ENCODE measurements at regions of chr2 and their contacts with region 1.

Region 1: GRCh38 chr2:211455216-211455841 is 898.9 kb downstream of the CPS1 start:
- DNase-seq: peak; percentile 39
- H3K4me3 ChIP-seq: peak overlapping the region in 1 of 2 experiments; percentile 40; a peak in 1 of 4 replicates
- H3K27ac ChIP-seq: no peak overlapping the region
- H3K4me1 ChIP-seq: peaks cover 3 to 8% of the 10 kb centered on the region in 2 experiments; a peak in 3 of 4 replicates
- H3K27me3 ChIP-seq: no peaks in the 10 kb centered on the region
- CTCF ChIP-seq: peak; percentile 98
- EP300 ChIP-seq: no peak
- RAD21 ChIP-seq: peak; percentile 77

Region 2: GRCh38 chr2:211437396-211437795 is 17.9 kb before region 1 on chr2:
- CTCF ChIA-PET with region 1: interaction called, 24 read pairs
- POLR2A ChIA-PET with region 1: no interaction called
- DNase-seq: no peak
- H3K4me3 ChIP-seq: no peak overlapping the region
- H3K27ac ChIP-seq: no peak overlapping the region
- H3K4me1 ChIP-seq: no peaks in the 10 kb centered on the region; a peak in 2 of 4 replicates
- H3K27me3 ChIP-seq: no peaks in the 10 kb centered on the region
- CTCF ChIP-seq: no peak
- EP300 ChIP-seq: no peak
- RAD21 ChIP-seq: no peak

Measured in SK-N-SH (cell line).